B cell (primary cell): ENCODE measurements at regions of chr2 and their contacts with region 1.

Region 1: GRCh38 chr2:75466708-75467311 is 93.9 kb downstream of the EVA1A start:
- DNase-seq: peak; percentile 49
- ATAC-seq: no peak
- H3K4me3 ChIP-seq: no peak overlapping the region
- H3K4me3 Mint-ChIP-seq: no peak overlapping the region
- H3K27ac ChIP-seq: no peak overlapping the region
- H3K27ac Mint-ChIP-seq: no peak overlapping the region
- H3K4me1 ChIP-seq: no peaks in the 10 kb centered on the region
- H3K4me1 Mint-ChIP-seq: peaks cover 1% of the 10 kb centered on the region
- H3K27me3 ChIP-seq: peaks cover 0 to 11% (median under 1%) of the 10 kb centered on the region in 4 experiments
- H3K27me3 Mint-ChIP-seq: peaks cover 20% of the 10 kb centered on the region
- CTCF ChIP-seq: peak; percentile 79

Region 2: DNA sequence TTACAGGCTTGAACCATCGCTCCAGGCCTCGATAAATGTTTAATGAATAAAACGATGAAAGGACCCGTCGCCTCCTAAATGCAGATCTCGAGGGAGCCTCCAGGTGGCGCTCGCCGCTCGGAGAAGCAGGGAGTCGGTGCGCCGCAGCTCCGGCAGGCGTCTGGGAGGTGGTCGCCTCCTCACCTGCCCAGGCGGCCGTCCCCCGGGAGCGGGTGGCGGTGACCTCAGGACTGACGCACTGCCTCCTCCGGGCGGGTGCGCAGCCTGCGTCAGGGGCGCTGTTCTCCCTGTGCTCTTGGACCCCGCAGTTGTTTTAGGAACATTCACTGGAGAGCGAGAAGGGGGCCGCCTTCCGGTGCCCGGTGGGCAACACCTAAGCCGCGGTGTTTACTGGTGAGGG is 547.0 kb before region 1 on chr2:
- CTCF ChIA-PET with region 1: interaction called, 17 read pairs
- POLR2A ChIA-PET with region 1: no interaction called
- intact Hi-C with region 1: loop called (anchors 1 kb)
- DNase-seq: peak; percentile 79
- ATAC-seq: peak; percentile 88
- H3K4me3 ChIP-seq: peak overlapping the region in 1 of 5 experiments; percentile 21
- H3K4me3 Mint-ChIP-seq: peak overlapping the region; percentile 68
- H3K27ac ChIP-seq: no peak overlapping the region
- H3K27ac Mint-ChIP-seq: peak overlapping the region; percentile 15
- H3K4me1 ChIP-seq: peaks cover 3 to 7% of the 10 kb centered on the region in 2 donors
- H3K4me1 Mint-ChIP-seq: peaks cover 27% of the 10 kb centered on the region
- H3K27me3 ChIP-seq: peaks cover 0 to 6% (median 0%) of the 10 kb centered on the region in 4 experiments
- H3K27me3 Mint-ChIP-seq: peaks cover 18% of the 10 kb centered on the region
- CTCF ChIP-seq: peak; percentile 96

Region 3: DNA sequence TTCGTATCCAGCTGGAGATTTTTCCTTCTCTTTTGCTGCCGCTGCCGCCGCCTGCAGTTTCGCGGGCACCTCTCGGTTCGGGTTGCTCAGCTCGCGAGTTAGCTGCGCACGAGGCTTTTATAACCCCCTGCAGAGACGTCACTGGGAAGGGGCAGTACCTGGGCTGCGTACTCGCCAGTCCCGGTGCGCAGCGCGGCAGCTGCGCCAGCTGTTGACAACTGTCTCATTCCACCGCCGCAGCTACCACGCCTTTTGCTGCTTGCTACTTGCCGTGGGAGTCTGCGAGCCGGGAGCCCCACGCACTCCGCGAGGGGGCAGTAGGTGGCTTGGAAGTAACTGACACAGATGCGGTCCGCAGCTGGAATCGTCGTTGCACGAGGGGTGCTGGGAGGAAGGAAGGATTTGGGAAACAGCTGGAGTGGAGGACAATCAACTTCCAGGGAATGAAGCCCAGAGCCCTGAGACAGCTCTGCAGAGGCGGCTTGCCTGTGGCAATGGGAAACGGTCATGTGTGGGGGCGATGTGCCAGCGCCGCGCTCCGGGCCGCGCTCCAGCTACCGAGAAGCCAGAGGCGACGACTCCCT is 267.3 kb before region 1 on chr2 and contains the start of gene TACR1:
- CTCF ChIA-PET with region 1: interaction called, 61 read pairs
- POLR2A ChIA-PET with region 1: no interaction called
- intact Hi-C with region 1: loop called (anchors 1 kb)
- DNase-seq: peak; percentile 70
- ATAC-seq: peak; percentile 71
- H3K4me3 ChIP-seq: peak within 1 kb of the TSS in 4 of 5 experiments; percentile 9 to 49 (median 36)
- H3K4me3 Mint-ChIP-seq: peak within 1 kb of the TSS; percentile 91
- H3K27ac ChIP-seq: no peak within 1 kb of the TSS
- H3K27ac Mint-ChIP-seq: no peak within 1 kb of the TSS
- H3K4me1 ChIP-seq: peaks cover 22 to 23% of the 10 kb centered on the region in 2 donors
- H3K4me1 Mint-ChIP-seq: peaks cover 23% of the 10 kb centered on the region
- H3K27me3 ChIP-seq: peaks cover 0 to 41% (median 31%) of the 10 kb centered on the region in 4 experiments
- H3K27me3 Mint-ChIP-seq: peaks cover 57% of the 10 kb centered on the region
- CTCF ChIP-seq: peak; percentile 65
- total RNA-seq, gene TACR1: 0.05 TPM in 1 of 2 replicates, not detected in the other

Region 4: DNA sequence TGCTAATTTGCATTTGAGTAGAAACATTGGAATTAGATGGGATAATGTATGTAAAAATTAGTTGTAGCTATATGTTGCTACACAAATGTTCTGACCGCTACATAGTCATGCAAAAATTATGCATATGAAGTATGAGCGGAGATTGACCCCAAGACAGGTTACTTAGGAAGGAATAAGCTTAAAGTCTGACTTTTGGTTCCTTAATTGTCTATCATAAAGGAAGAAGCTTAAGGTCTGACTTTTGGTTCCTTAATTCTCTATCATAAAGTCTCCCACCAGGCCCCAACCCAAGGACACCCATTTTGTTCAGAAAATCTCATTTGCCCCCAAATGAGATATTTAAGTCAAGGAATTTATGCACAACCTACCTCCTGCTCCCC is 12.6 kb before region 1 on chr2:
- CTCF ChIA-PET with region 1: interaction called, 25 read pairs
- POLR2A ChIA-PET with region 1: no interaction called
- intact Hi-C with region 1: no loop called
- DNase-seq: no peak
- ATAC-seq: no peak
- H3K4me3 ChIP-seq: no peak overlapping the region
- H3K4me3 Mint-ChIP-seq: no peak overlapping the region
- H3K27ac ChIP-seq: no peak overlapping the region
- H3K27ac Mint-ChIP-seq: no peak overlapping the region
- H3K4me1 ChIP-seq: peaks cover 3 to 4% of the 10 kb centered on the region in 2 donors
- H3K4me1 Mint-ChIP-seq: peaks cover 11% of the 10 kb centered on the region
- H3K27me3 ChIP-seq: peaks cover 0 to 4% (median 0%) of the 10 kb centered on the region in 4 experiments
- H3K27me3 Mint-ChIP-seq: peaks cover 13% of the 10 kb centered on the region
- CTCF ChIP-seq: no peak

Region 5: GRCh38 chr2:75833386-75833785 is 366.6 kb after region 1 on chr2:
- CTCF ChIA-PET with region 1: no interaction called
- POLR2A ChIA-PET with region 1: no interaction called
- intact Hi-C with region 1: no loop called
- DNase-seq: no peak
- ATAC-seq: no peak
- H3K4me3 ChIP-seq: no peak overlapping the region
- H3K4me3 Mint-ChIP-seq: no peak overlapping the region
- H3K27ac ChIP-seq: no peak overlapping the region
- H3K27ac Mint-ChIP-seq: no peak overlapping the region
- H3K4me1 ChIP-seq: no peaks in the 10 kb centered on the region
- H3K4me1 Mint-ChIP-seq: no peaks in the 10 kb centered on the region
- H3K27me3 ChIP-seq: no peaks in the 10 kb centered on the region
- H3K27me3 Mint-ChIP-seq: no peaks in the 10 kb centered on the region
- CTCF ChIP-seq: no peak